Heart right ventricle (tissue), 16 donors: ENCODE measurements at regions of chr9 and their contacts with region 1.

Region 1: GRCh38 chr9:26656003-26656870 is 236.4 kb downstream of the CAAP1 start:
- DNase-seq: no peak
- ATAC-seq: no peak
- H3K4me3 ChIP-seq: no peak overlapping the region
- H3K27ac ChIP-seq: no peak overlapping the region
- H3K4me1 ChIP-seq: no peaks in the 10 kb centered on the region
- H3K27me3 ChIP-seq: peaks cover 0 to 14% (median 0%) of the 10 kb centered on the region in 7 donors
- CTCF ChIP-seq: peak in 3 of 9 donors; percentile 8 to 26 (median 15)

Region 2: GRCh38 chr9:26375448-26375847 is 280.8 kb before region 1 on chr9:
- intact Hi-C with region 1: loop called in 1 of 10 experiments (anchors 10 kb)
- DNase-seq: no peak
- ATAC-seq: no peak
- H3K4me3 ChIP-seq: no peak overlapping the region
- H3K27ac ChIP-seq: no peak overlapping the region
- H3K4me1 ChIP-seq: no peaks in the 10 kb centered on the region
- H3K27me3 ChIP-seq: no peaks in the 10 kb centered on the region
- CTCF ChIP-seq: no peak

Region 3: GRCh38 chr9:26579056-26579455 is 77.2 kb before region 1 on chr9:
- intact Hi-C with region 1: loop called in 1 of 10 experiments (anchors 10 kb)
- DNase-seq: no peak
- ATAC-seq: no peak
- H3K4me3 ChIP-seq: no peak overlapping the region
- H3K27ac ChIP-seq: no peak overlapping the region
- H3K4me1 ChIP-seq: no peaks in the 10 kb centered on the region
- H3K27me3 ChIP-seq: no peaks in the 10 kb centered on the region
- CTCF ChIP-seq: no peak

Region 4: GRCh38 chr9:26695298-26695622 is 39.0 kb after region 1 on chr9:
- intact Hi-C with region 1: no loop called
- DNase-seq: no peak
- ATAC-seq: no peak
- H3K4me3 ChIP-seq: no peak overlapping the region
- H3K27ac ChIP-seq: no peak overlapping the region
- H3K4me1 ChIP-seq: no peaks in the 10 kb centered on the region
- H3K27me3 ChIP-seq: no peaks in the 10 kb centered on the region
- CTCF ChIP-seq: no peak

Region 5: GRCh38 chr9:26706223-26706622 is 50.0 kb after region 1 on chr9:
- intact Hi-C with region 1: no loop called
- DNase-seq: no peak
- ATAC-seq: no peak
- H3K4me3 ChIP-seq: no peak overlapping the region
- H3K27ac ChIP-seq: no peak overlapping the region
- H3K4me1 ChIP-seq: no peaks in the 10 kb centered on the region
- H3K27me3 ChIP-seq: no peaks in the 10 kb centered on the region
- CTCF ChIP-seq: no peak